ENCODE measurements at regions of chr10 and their contacts with region 1.

Region 1: GRCh38 chr10:95246579-95247051 is 44.2 kb downstream of the PDLIM1 start:
- DNase-seq: peak; percentile 94
- H3K4me3 ChIP-seq: no peak overlapping the region
- H3K27ac ChIP-seq: peak overlapping the region; percentile 12 to 56 (median 43)
- H3K4me1 ChIP-seq: peaks cover 19 to 37% (median 23%) of the 10 kb centered on the region in 4 donors
- H3K27me3 ChIP-seq: no peaks in the 10 kb centered on the region
- CTCF ChIP-seq: peak; percentile 71 to 83 (median 80)
- EP300 ChIP-seq: no peak
- POLR2A ChIP-seq: no peak

Region 2: DNA sequence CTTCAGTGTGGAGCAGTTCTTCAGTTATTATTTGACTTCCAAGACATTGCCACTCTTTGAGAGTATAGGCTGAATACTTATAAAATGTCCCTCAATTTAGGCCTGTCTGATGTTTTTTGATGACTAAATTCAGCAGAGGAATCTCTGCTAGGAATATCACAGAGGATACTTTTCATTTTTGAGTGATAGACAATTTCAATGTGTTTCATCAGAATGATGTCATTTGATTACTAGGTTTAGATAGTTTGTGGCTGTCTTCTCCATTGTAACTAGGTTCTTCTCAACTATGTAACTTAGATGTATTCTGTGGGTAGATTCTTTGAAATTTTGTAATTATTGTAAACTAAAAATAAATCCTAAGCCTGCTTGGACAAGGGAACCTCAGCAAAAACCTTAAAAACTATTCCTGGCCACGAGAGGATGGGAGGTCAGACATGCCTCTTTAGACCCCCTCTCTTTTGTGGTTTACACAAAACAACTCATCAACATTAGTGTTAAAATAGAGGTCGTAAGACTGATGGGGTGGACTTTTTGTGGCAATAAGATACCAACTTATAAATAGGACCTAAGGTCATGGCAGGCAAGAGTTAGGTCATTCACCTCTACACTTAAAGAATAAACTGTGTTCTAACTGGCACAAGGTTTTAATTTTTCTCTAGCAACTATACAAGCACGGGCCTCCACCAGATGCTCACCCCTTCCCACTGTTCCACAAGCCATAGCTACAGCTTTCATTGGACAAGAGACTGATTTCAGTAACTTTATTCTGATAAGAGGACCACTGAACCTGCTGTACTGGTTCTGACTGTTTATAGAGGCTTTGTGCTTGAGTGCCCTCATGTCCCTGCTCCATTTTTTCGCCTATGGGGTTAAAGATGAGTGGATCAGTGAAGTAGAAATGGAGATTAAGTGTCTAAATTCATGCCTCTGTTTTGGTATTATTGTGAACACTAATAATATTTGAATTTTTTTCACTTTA is 211.0 kb before region 1 on chr10:
- intact Hi-C with region 1: no loop called
- DNase-seq: no peak
- H3K4me3 ChIP-seq: no peak overlapping the region
- H3K27ac ChIP-seq: no peak overlapping the region
- H3K4me1 ChIP-seq: no peaks in the 10 kb centered on the region
- H3K27me3 ChIP-seq: no peaks in the 10 kb centered on the region
- CTCF ChIP-seq: no peak
- EP300 ChIP-seq: no peak
- POLR2A ChIP-seq: no peak

Region 3: GRCh38 chr10:95183271-95184230 is 63.1 kb before region 1 on chr10:
- intact Hi-C with region 1: loop called (anchors 5 kb)
- DNase-seq: no peak
- H3K4me3 ChIP-seq: peak overlapping the region; percentile 64 to 71 (median 68)
- H3K27ac ChIP-seq: peak overlapping the region; percentile 74 to 86 (median 84)
- H3K4me1 ChIP-seq: peaks cover 0 to 14% (median 9%) of the 10 kb centered on the region in 4 donors
- H3K27me3 ChIP-seq: no peaks in the 10 kb centered on the region
- CTCF ChIP-seq: peak; percentile 89 to 98 (median 92)
- EP300 ChIP-seq: no peak
- POLR2A ChIP-seq: no peak

Region 4: GRCh38 chr10:95289003-95289920 is 42.6 kb after region 1 on chr10:
- intact Hi-C with region 1: loop called (anchors 5 kb)
- DNase-seq: no peak
- H3K4me3 ChIP-seq: peak overlapping the region; percentile 76 to 91 (median 82)
- H3K27ac ChIP-seq: peak overlapping the region; percentile 77 to 86 (median 81)
- H3K4me1 ChIP-seq: peaks cover 19 to 43% (median 27%) of the 10 kb centered on the region in 4 donors
- H3K27me3 ChIP-seq: peaks cover 0 to 23% (median 8%) of the 10 kb centered on the region in 4 donors
- CTCF ChIP-seq: peak in 1 of 3 experiments; percentile 26
- EP300 ChIP-seq: no peak
- POLR2A ChIP-seq: no peak

Region 5: GRCh38 chr10:95363303-95363912 is 116.8 kb after region 1 on chr10:
- intact Hi-C with region 1: loop called (anchors 2 kb)
- DNase-seq: no peak
- H3K4me3 ChIP-seq: no peak overlapping the region
- H3K27ac ChIP-seq: peak overlapping the region; percentile 7 to 70 (median 44)
- H3K4me1 ChIP-seq: peaks cover 37 to 95% (median 93%) of the 10 kb centered on the region in 4 donors
- H3K27me3 ChIP-seq: no peaks in the 10 kb centered on the region
- CTCF ChIP-seq: peak; percentile 77 to 84 (median 83)
- EP300 ChIP-seq: no peak
- POLR2A ChIP-seq: no peak